Dendritic cell treated with granulocyte-macrophage colony-stimulating factor and Interleukin-4, amounts not matched to agents 40 ng/mL and 50 ng/mL, for 4 days (primary cell): ENCODE measurements at regions of chr15 and their contacts with region 1.

Region 1: DNA sequence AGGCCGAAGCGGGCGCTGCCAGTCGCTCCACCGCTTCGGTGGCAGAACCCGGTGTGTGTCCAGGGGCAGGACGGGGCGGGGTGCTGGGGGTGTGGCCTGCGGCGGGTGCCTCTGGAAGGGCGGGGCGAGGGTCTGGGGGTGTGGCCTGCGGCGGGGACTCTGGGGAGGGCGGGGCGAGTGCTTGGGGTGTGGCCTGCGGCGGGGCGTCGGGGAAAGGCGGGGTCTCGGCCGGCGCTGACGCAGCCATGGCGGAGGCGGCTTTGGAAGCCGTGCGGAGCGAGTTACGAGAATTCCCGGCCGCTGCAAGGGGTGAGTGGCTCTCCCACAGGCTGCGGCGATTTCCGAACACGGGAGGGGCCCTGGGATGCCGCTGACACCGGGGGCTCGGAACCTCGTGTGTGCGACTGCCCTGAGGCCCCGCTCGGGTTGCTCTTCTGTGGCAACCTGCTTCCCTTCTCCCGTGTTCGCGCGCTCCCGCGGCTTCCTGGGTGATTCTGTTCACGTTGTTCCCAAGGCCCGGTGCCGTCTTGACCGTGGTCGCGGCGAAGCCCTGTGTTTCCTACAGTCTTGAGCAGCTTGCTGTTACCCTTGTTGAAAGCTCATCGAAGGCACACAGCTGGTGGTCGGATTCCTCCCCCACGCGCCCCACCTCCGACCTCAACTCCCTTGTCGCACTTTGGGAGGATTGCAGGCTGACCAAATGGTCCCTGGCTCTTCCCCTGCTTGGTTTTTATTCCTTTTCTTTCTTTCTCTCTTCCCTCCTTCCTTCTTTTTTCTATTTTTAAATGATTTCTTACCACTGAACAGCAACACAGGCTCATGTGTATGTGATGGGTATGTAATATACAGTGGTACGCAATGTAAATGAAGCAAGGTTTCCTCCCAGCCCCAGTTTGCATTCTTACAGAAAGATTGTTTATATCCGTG is at the start of gene JMJD7:
- H3K4me3 Mint-ChIP-seq: peak within 1 kb of the TSS; percentile 82
- H3K27ac Mint-ChIP-seq: peak within 1 kb of the TSS; percentile 87
- H3K4me1 Mint-ChIP-seq: peaks cover 15% of the 10 kb centered on the region
- H3K27me3 Mint-ChIP-seq: peaks cover 14% of the 10 kb centered on the region

Region 2: GRCh38 chr15:41501191-41501917 is 326.8 kb before region 1 on chr15:
- intact Hi-C with region 1: no loop called
- H3K4me3 Mint-ChIP-seq: peak overlapping the region; percentile 68
- H3K27ac Mint-ChIP-seq: no peak overlapping the region
- H3K4me1 Mint-ChIP-seq: peaks cover 29% of the 10 kb centered on the region
- H3K27me3 Mint-ChIP-seq: peaks cover 89% of the 10 kb centered on the region

Region 3: GRCh38 chr15:41904541-41905005 is 76.4 kb after region 1 on chr15:
- intact Hi-C with region 1: loop called (anchors 2 kb)
- H3K4me3 Mint-ChIP-seq: no peak overlapping the region
- H3K27ac Mint-ChIP-seq: peak overlapping the region; percentile 89
- H3K4me1 Mint-ChIP-seq: peaks cover 51% of the 10 kb centered on the region
- H3K27me3 Mint-ChIP-seq: no peaks in the 10 kb centered on the region

Region 4: DNA sequence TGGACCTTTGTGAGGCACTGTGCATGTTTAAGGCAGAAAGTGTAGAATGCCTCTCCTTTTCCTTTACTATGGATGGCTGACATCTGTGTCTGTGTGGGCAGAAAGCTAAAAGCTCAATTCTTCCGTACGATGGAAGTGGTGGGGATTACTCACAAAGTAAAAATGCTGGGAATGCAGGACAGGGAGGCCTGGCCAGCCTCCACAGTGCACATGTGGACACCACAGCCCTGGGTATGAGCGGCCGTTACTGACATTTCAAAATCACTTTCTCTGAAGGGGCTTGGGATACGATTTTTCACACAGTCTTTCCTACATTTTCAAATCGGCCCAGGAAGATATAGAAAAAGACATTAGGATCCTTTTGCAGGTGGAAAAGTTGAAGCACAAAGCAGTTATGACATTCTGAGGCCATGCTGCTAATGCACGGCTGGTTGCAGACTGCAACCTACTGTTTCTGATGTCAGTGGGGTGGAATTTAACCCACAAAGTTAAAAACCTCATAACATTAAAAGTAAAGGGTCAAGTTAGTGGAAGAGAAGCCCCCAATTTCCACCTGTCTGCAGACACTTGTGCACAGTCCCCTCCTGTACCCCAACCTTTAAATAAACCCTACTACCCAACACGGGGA is 116.3 kb after region 1 on chr15:
- intact Hi-C with region 1: no loop called
- H3K4me3 Mint-ChIP-seq: no peak overlapping the region
- H3K27ac Mint-ChIP-seq: no peak overlapping the region
- H3K4me1 Mint-ChIP-seq: peaks cover 24% of the 10 kb centered on the region
- H3K27me3 Mint-ChIP-seq: no peaks in the 10 kb centered on the region

Region 5: DNA sequence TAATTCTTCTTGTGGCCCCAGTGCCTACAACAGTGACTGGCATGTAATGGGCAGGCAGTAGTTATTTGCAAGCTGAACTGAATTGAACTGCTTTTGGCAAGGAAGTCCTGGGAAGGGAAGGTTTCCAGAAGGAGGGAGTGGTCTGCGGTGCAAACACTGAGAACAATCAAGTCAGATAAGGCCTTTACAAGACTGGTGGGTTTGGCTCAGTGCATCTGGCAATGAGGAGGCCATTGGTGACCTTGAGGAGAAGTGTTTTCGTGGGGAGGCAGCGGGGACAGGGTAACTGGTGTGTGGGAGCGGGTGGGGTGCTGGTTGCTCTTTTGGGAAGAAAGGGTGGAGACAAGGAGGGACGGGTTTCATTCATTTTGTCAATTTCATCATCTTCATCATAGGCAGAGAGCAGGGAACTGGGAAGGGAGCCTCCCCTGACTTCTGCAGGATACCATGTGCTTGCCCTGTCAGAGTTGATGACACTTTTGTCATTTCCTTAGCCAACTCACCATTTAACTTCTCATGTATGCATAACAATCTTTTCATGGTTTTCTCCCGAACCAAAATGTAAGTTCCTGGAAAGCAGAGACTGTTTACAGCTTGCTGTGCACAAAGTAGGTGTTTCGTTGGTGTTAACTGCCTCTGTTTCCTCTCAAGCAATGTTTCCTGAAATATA is 152.6 kb after region 1 on chr15:
- intact Hi-C with region 1: no loop called
- H3K4me3 Mint-ChIP-seq: no peak overlapping the region
- H3K27ac Mint-ChIP-seq: no peak overlapping the region
- H3K4me1 Mint-ChIP-seq: peaks cover 13% of the 10 kb centered on the region
- H3K27me3 Mint-ChIP-seq: no peaks in the 10 kb centered on the region